ENCODE measurements at regions of chr3 and their contacts with region 1.

Region 1: GRCh38 chr3:69200384-69201068 is 78.1 kb upstream of the LMOD3 start:
- DNase-seq: peak; percentile 80
- ATAC-seq: peak; percentile 44
- H3K4me3 Mint-ChIP-seq: peak overlapping the region; percentile 74
- H3K27ac Mint-ChIP-seq: peak overlapping the region; percentile 91
- H3K4me1 Mint-ChIP-seq: peaks cover 66% of the 10 kb centered on the region
- H3K27me3 Mint-ChIP-seq: peaks cover 3% of the 10 kb centered on the region

Region 2: GRCh38 chr3:69013253-69014021 is 187.1 kb before region 1 on chr3 and contains the start of gene EOGT:
- CTCF ChIA-PET with region 1: no interaction called
- POLR2A ChIA-PET with region 1: no interaction called
- intact Hi-C with region 1: loop called in 1 of 2 experiments (anchors 5 kb)
- DNase-seq: peak; percentile 88
- ATAC-seq: peak; percentile 85
- H3K4me3 Mint-ChIP-seq: peak within 1 kb of the TSS; percentile 77
- H3K27ac Mint-ChIP-seq: peak within 1 kb of the TSS; percentile 82
- H3K4me1 Mint-ChIP-seq: peaks cover 24% of the 10 kb centered on the region
- H3K27me3 Mint-ChIP-seq: no peaks in the 10 kb centered on the region
- total RNA-seq, gene EOGT: 6.0 to 8.4 TPM

Region 3: DNA sequence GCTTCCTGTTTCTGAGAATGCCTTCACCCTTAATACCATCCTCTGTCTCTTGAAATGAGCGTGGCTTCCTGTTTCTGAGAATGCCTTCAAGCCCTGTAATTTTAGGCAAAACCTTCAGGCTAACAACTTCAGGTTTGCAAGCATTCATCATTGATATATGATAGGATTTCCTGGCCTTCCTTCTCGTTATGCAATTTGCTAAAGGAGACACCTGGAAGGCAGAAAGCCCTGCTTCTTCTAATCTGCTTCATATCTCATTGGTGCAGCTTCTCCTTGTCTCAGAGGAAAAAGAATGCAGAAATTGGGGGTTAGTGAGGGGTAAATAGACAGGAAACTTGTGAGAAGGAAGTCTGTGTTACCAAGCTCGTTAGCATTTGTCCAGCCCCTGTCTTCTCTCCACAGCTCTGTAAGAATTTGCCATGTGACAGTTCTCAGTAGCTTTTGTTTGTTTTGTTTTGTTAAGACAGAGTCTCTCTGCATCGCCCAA is 108.5 kb before region 1 on chr3:
- CTCF ChIA-PET with region 1: no interaction called
- POLR2A ChIA-PET with region 1: no interaction called
- intact Hi-C with region 1: loop called in 1 of 2 experiments (anchors 2 kb)
- DNase-seq: peak; percentile 33
- ATAC-seq: peak; percentile 70
- H3K4me3 Mint-ChIP-seq: peak overlapping the region; percentile 56
- H3K27ac Mint-ChIP-seq: peak overlapping the region; percentile 98
- H3K4me1 Mint-ChIP-seq: peaks cover 85% of the 10 kb centered on the region
- H3K27me3 Mint-ChIP-seq: no peaks in the 10 kb centered on the region

Region 4: GRCh38 chr3:69212411-69213139 is 12.0 kb after region 1 on chr3:
- CTCF ChIA-PET with region 1: interaction called, 30 read pairs
- POLR2A ChIA-PET with region 1: interaction called, 13 read pairs
- intact Hi-C with region 1: loop called (anchors 1 kb)
- DNase-seq: no peak
- ATAC-seq: peak; percentile 88
- H3K4me3 Mint-ChIP-seq: no peak overlapping the region
- H3K27ac Mint-ChIP-seq: peak overlapping the region; percentile 58
- H3K4me1 Mint-ChIP-seq: peaks cover 32% of the 10 kb centered on the region
- H3K27me3 Mint-ChIP-seq: peaks cover 3% of the 10 kb centered on the region

Region 5: GRCh38 chr3:69282181-69282580 is 81.7 kb after region 1 on chr3:
- CTCF ChIA-PET with region 1: no interaction called
- POLR2A ChIA-PET with region 1: interaction called, 4 read pairs
- intact Hi-C with region 1: loop called (anchors 1 to 2 kb)
- DNase-seq: peak; percentile 83
- ATAC-seq: peak; percentile 100
- H3K4me3 Mint-ChIP-seq: no peak overlapping the region
- H3K27ac Mint-ChIP-seq: peak overlapping the region; percentile 52
- H3K4me1 Mint-ChIP-seq: peaks cover 26% of the 10 kb centered on the region
- H3K27me3 Mint-ChIP-seq: peaks cover under 1% of the 10 kb centered on the region

Region 6: GRCh38 chr3:69433969-69434325 is 233.4 kb after region 1 on chr3:
- CTCF ChIA-PET with region 1: no interaction called
- POLR2A ChIA-PET with region 1: interaction called, 4 read pairs
- intact Hi-C with region 1: loop called in 1 of 2 experiments (anchors 1 kb)
- DNase-seq: peak; percentile 26
- ATAC-seq: peak; percentile 59
- H3K4me3 Mint-ChIP-seq: no peak overlapping the region
- H3K27ac Mint-ChIP-seq: no peak overlapping the region
- H3K4me1 Mint-ChIP-seq: peaks cover 38% of the 10 kb centered on the region
- H3K27me3 Mint-ChIP-seq: peaks cover 8% of the 10 kb centered on the region